ENCODE measurements at regions of chr3 and their contacts with region 1.

Region 1: GRCh38 chr3:170414202-170414663 is 4.4 kb upstream of the CLDN11 start:
- DNase-seq: peak in 6 of 9 experiments; percentile 6 to 64 (median 36)
- ATAC-seq: peak; percentile 75
- H3K4me3 ChIP-seq: no peak overlapping the region
- H3K4me3 Mint-ChIP-seq: no peak overlapping the region
- H3K27ac ChIP-seq: no peak overlapping the region
- H3K27ac Mint-ChIP-seq: no peak overlapping the region
- H3K4me1 ChIP-seq: peaks cover 7% of the 10 kb centered on the region
- H3K4me1 Mint-ChIP-seq: peaks cover 8% of the 10 kb centered on the region
- H3K27me3 ChIP-seq: peaks cover 5 to 8% of the 10 kb centered on the region in 2 experiments
- H3K27me3 Mint-ChIP-seq: peaks cover 23% of the 10 kb centered on the region
- CTCF ChIP-seq: peak; percentile 97

Region 2: DNA sequence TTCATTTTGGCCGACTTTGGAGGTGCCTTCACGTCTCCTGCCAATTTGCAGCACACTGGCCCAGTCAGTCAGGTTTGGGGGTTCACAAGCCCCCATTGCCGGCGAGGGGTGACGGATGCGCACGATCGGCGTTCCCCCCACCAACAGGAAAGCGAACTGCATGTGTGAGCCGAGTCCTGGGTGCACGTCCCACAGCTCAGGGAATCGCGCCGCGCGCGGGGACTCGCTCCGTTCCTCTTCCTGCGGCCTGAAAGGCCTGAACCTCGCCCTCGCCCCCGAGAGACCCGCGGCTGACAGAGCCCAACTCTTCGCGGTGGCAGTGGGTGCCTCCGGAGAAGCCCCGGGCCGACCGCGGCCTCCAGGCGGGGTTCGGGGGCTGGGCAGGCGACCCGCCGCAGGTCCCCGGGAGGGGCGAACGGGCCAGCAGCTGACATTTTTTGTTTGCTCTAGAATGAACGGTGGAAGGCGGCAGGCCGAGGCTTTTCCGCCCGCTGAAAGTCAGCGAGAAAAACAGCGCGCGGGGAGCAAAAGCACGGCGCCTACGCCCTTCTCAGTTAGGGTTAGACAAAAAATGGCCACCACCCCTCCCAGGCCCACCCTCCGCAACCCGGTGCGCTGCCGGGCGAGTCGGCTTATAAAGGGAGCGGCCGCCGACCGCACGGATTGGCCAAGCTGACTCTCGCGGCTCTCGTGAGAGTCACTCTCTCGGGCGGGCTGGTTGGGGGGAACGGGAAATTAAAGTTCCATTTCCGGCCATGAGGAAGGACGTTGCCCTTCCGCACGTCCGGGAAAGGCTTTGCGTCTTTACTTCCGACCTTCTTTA is 649.6 kb before region 1 on chr3 and contains the start of gene TERC:
- CTCF ChIA-PET with region 1: no interaction called
- POLR2A ChIA-PET with region 1: no interaction called
- intact Hi-C with region 1: loop called in 1 of 2 experiments (anchors 5 kb)
- DNase-seq: peak; percentile 84 to 98 (median 93)
- ATAC-seq: peak; percentile 84
- H3K4me3 ChIP-seq: peak within 1 kb of the TSS; percentile 79 to 81
- H3K4me3 Mint-ChIP-seq: peak within 1 kb of the TSS; percentile 96
- H3K27ac ChIP-seq: peak within 1 kb of the TSS; percentile 91 to 93
- H3K27ac Mint-ChIP-seq: peak within 1 kb of the TSS; percentile 98
- H3K4me1 ChIP-seq: peaks cover 14% of the 10 kb centered on the region
- H3K4me1 Mint-ChIP-seq: peaks cover 25% of the 10 kb centered on the region
- H3K27me3 ChIP-seq: no peaks in the 10 kb centered on the region
- H3K27me3 Mint-ChIP-seq: no peaks in the 10 kb centered on the region
- CTCF ChIP-seq: no peak
- total RNA-seq, gene TERC: 12.7 to 13.3 TPM

Region 3: GRCh38 chr3:170307671-170308403 is 106.4 kb before region 1 on chr3:
- CTCF ChIA-PET with region 1: interaction called, 12 read pairs
- POLR2A ChIA-PET with region 1: no interaction called
- intact Hi-C with region 1: loop called (anchors 1 kb)
- DNase-seq: no peak
- ATAC-seq: no peak
- H3K4me3 ChIP-seq: no peak overlapping the region
- H3K4me3 Mint-ChIP-seq: no peak overlapping the region
- H3K27ac ChIP-seq: no peak overlapping the region
- H3K27ac Mint-ChIP-seq: no peak overlapping the region
- H3K4me1 ChIP-seq: no peaks in the 10 kb centered on the region
- H3K4me1 Mint-ChIP-seq: no peaks in the 10 kb centered on the region
- H3K27me3 ChIP-seq: no peaks in the 10 kb centered on the region
- H3K27me3 Mint-ChIP-seq: no peaks in the 10 kb centered on the region
- CTCF ChIP-seq: no peak

Region 4: DNA sequence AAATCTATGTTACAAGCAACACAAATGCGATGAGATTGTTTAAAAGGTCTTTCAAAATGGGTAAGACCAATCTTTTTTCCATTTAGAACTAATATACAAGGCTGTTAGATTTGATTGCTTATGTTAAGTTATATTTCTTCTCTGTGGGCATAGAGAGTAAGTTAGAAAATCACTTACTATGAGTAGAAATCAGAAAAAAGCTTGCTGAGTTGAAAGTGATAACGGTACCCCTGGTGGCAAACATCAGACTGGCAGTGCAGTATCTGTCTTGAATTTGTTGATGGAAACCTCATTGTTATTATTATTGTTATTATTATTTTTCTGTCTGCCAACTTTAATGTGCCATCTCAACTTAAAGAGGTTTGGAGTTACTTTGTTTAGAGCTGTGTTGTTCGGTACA is 16.8 kb after region 1 on chr3:
- CTCF ChIA-PET with region 1: interaction called, 17 read pairs
- POLR2A ChIA-PET with region 1: no interaction called
- intact Hi-C with region 1: no loop called
- DNase-seq: no peak
- ATAC-seq: no peak
- H3K4me3 ChIP-seq: no peak overlapping the region
- H3K4me3 Mint-ChIP-seq: no peak overlapping the region
- H3K27ac ChIP-seq: no peak overlapping the region
- H3K27ac Mint-ChIP-seq: no peak overlapping the region
- H3K4me1 ChIP-seq: peaks cover 8% of the 10 kb centered on the region
- H3K4me1 Mint-ChIP-seq: peaks cover 17% of the 10 kb centered on the region
- H3K27me3 ChIP-seq: no peaks in the 10 kb centered on the region
- H3K27me3 Mint-ChIP-seq: no peaks in the 10 kb centered on the region
- CTCF ChIP-seq: no peak

Region 5: GRCh38 chr3:170469151-170470062 is 55.2 kb after region 1 on chr3:
- CTCF ChIA-PET with region 1: no interaction called
- POLR2A ChIA-PET with region 1: no interaction called
- intact Hi-C with region 1: no loop called
- DNase-seq: no peak
- ATAC-seq: no peak
- H3K4me3 ChIP-seq: no peak overlapping the region
- H3K4me3 Mint-ChIP-seq: no peak overlapping the region
- H3K27ac ChIP-seq: no peak overlapping the region
- H3K27ac Mint-ChIP-seq: no peak overlapping the region
- H3K4me1 ChIP-seq: no peaks in the 10 kb centered on the region
- H3K4me1 Mint-ChIP-seq: no peaks in the 10 kb centered on the region
- H3K27me3 ChIP-seq: no peaks in the 10 kb centered on the region
- H3K27me3 Mint-ChIP-seq: peaks cover 25% of the 10 kb centered on the region
- CTCF ChIP-seq: no peak

Region 6: GRCh38 chr3:170811928-170812591 is 397.8 kb after region 1 on chr3:
- CTCF ChIA-PET with region 1: interaction called, 34 read pairs
- POLR2A ChIA-PET with region 1: no interaction called
- intact Hi-C with region 1: loop called (anchors 1 to 2 kb)
- DNase-seq: peak; percentile 37 to 78 (median 59)
- ATAC-seq: peak; percentile 98
- H3K4me3 ChIP-seq: no peak overlapping the region
- H3K4me3 Mint-ChIP-seq: no peak overlapping the region
- H3K27ac ChIP-seq: no peak overlapping the region
- H3K27ac Mint-ChIP-seq: no peak overlapping the region
- H3K4me1 ChIP-seq: no peaks in the 10 kb centered on the region
- H3K4me1 Mint-ChIP-seq: no peaks in the 10 kb centered on the region
- H3K27me3 ChIP-seq: peaks cover 0 to 2% of the 10 kb centered on the region in 2 experiments
- H3K27me3 Mint-ChIP-seq: peaks cover 2% of the 10 kb centered on the region
- CTCF ChIP-seq: peak; percentile 87

Region 7: DNA sequence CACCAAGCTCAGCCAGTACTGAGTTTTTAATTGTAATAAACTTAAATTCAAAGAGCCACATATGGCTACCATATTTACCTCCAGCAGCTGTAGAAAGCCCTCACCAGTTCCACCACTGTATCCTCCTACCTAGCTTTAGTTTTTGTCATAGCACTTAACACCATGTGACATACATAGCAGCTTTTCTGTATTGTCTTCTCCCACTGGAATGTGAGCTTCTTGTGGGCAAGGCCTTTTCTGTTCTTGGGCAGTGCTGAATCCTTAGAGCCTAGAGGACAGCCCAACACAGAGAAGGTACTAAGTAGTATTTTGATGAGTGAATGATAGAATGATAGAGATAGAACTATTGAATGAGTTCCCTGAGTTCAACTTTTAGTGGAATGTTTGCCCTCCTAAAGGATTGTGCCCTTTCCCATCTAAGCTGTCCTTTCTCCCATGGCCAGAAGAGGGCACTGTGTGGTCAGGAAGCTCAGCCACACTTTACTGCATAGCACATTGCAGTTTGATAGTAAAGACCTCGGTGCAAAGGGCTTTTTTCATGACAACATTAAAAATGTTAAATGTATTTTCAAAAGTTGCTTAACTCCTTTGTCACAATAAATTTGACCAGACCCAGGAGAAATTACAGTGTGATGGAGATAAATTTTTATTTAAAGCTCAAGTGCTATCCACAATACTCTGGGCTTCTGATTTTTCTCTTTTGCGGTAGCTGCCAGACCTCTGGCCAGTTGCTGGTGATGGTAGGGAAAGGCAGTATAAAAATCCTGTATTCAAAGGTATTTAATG is 1918.2 kb after region 1 on chr3:
- CTCF ChIA-PET with region 1: no interaction called
- POLR2A ChIA-PET with region 1: no interaction called
- intact Hi-C with region 1: loop called in 1 of 2 experiments (anchors 10 kb)
- DNase-seq: peak; percentile 4 to 71 (median 53)
- ATAC-seq: peak; percentile 81
- H3K4me3 ChIP-seq: no peak overlapping the region
- H3K4me3 Mint-ChIP-seq: no peak overlapping the region
- H3K27ac ChIP-seq: no peak overlapping the region
- H3K27ac Mint-ChIP-seq: no peak overlapping the region
- H3K4me1 ChIP-seq: no peaks in the 10 kb centered on the region
- H3K4me1 Mint-ChIP-seq: peaks cover 2% of the 10 kb centered on the region
- H3K27me3 ChIP-seq: no peaks in the 10 kb centered on the region
- H3K27me3 Mint-ChIP-seq: no peaks in the 10 kb centered on the region
- CTCF ChIP-seq: peak; percentile 79